ENCODE measurements at regions of chr13 and their contacts with region 1.

Region 1: DNA sequence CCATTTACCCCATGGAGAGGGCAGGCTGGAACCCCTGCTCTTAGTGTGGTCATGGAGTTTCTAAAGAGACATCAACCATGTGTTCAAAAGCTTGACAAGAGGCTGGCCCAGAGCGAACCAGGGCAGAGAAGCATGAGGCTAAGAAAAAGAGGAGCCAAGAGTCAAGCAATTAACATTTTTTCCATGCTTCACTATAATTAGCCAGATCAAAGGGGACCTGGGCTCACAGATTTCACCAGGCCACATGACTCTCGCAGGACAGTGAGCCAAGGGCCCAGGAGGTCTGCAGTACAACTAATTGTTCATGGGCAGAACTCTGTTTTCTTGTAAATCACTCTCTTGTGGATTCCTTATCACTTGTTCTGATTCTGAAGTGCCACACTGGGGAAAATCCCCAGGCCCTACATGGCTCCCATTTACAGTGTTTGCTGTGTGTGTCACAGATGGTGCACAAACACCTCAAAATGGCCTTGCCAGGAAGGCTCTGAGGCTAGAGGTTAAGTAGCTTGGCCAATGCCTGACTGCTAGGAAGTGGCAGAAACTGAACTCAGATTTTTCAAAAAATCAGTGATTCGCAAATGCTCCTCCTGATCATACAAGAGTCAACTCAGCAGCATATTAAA is 101.2 kb downstream of the LHFPL6 start:
- DNase-seq: peak; percentile 72
- ATAC-seq: peak; percentile 90

Region 2: DNA sequence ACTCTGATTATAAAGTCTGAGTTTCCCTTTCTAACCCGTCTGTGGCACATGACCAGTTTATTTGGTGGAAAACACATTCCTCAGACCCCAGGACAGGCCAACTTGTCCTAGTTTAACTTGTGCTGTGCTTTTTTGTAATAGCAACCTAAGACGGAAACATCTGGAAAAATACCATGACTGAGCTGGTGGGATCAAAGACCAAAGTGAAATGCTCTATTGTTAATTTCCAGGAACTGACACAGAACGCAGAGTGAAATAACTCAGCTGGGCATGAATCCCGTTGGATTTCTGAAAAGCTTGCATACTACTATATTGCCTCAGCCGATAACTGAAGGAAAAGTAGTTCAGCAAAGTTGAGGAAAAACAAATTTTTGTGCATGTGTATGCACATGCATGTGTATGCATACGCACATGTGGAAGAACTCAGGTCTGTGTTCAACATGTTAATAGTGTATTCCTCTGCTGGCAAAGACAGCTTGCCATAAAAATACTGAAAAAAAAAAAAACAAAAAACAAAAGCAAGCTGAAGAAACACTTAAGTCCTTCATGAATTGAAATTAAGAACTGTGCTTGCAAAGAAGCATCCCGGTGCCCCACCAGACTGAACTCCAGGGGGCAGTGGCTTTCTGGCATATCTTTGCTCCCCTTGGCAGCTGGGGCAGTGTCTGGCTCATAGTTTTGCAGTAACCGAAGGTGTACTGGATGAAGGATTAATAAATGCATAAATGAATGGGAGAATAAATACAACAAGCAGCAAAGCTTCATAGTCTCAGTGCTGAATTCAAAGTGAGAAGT is 86.6 kb before region 1 on chr13:
- intact Hi-C with region 1: loop called (anchors 5 kb)
- DNase-seq: no peak
- ATAC-seq: peak; percentile 70

Region 3: DNA sequence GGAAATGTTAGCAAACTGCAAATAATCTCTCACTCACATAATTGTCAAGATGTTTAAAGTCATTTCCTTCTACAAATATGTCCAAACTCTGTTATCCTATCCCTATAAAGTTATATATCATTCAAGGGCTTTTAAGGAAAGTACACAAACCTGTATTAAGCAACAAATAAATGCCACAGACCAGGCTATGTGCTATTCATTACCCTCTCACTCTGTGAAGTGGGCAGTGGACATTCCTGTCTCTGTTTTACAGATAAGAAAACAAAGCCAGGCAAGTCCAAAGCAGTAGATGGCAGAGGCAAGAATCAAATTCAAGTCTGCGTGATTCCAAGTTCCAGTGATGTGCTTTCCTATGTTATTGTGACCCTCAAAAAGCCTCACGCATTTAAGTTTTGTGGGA is 39.4 kb before region 1 on chr13:
- intact Hi-C with region 1: loop called (anchors 2 kb)
- DNase-seq: no peak
- ATAC-seq: peak; percentile 78

Region 4: DNA sequence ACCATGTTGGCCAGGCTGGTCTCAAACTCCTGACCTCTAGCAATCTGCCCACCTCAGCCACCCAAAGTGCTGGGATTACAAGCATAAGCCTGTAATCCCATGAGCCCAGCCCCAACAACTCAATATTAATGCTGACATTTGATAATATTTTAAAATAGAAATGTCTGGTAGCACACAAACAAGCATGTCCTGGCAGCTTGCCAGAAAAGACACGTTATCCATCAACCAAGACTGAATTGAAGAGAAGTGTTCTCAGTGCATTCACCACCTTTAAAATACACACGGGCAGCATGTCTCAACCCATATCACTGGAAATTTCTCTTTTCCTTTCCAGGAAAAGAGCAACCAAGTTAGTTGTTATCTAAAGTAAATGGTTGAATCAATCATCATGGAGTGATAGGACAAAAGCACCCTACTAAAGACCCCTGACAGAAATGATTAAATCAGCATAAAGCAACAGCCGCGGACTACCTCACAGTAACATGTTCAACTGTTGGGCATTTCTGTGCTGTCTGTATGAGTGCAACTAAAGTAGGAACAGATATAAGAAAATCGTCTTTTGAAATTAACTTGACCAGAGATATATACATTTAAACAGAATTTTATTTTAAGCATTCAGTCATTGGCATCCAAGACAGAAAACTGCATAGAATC is 76.2 kb after region 1 on chr13:
- intact Hi-C with region 1: loop called (anchors 5 kb)
- DNase-seq: no peak
- ATAC-seq: peak; percentile 24